OCI-LY7 (cell line): ENCODE measurements at regions of chr10 and their contacts with region 1.

Region 1: DNA sequence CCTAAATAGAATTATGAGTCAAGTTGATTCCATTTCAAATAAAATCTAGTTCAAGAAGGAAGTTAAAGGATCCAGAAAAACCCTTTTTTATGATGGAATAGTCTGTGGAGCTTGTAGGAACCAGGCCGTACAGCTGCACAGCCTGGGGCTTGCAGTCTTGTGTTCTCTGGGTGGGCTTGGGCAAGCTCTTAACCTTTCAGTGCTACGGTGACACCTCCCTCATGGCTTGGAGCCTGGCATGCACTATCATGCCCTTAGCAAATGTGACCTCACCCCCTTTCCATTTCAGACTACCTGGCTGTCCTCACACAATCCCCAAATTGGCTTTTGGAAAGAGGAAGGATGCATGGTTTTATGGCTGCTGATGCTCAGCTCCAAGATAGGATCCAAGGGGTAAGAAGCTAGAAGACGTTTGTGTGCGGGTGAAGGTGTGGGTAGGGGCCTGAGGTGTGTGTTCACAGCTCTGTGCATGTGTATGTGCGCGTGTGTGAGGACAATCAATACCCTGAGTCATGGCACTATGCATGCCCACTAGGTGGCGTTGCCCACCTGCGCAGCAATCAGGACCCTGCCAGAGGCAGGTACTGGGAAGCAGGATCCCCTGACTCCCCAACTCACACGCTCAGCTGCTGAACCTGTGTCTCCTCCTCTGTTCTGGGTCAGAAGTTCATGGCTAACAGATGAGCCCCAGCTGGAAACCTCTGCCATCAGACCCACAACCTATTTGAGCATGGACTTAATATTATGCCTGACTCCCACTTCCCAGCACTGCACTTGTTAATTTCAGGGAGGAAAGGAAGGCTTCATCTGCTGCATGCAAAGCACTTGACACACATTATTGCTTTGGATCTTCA is 113.4 kb downstream of the PTPN20 start:
- DNase-seq: peak; percentile 67
- H3K4me3 ChIP-seq: no peak overlapping the region
- H3K27ac ChIP-seq: no peak overlapping the region
- H3K4me1 ChIP-seq: no peaks in the 10 kb centered on the region
- CTCF ChIP-seq: peak; percentile 92

Region 2: GRCh38 chr10:47038851-47039561 is 14.4 kb after region 1 on chr10:
- CTCF ChIA-PET with region 1: no interaction called
- POLR2A ChIA-PET with region 1: no interaction called
- intact Hi-C with region 1: no loop called
- DNase-seq: no peak
- H3K4me3 ChIP-seq: no peak overlapping the region
- H3K27ac ChIP-seq: no peak overlapping the region
- H3K4me1 ChIP-seq: no peaks in the 10 kb centered on the region
- CTCF ChIP-seq: no peak

Region 3: DNA sequence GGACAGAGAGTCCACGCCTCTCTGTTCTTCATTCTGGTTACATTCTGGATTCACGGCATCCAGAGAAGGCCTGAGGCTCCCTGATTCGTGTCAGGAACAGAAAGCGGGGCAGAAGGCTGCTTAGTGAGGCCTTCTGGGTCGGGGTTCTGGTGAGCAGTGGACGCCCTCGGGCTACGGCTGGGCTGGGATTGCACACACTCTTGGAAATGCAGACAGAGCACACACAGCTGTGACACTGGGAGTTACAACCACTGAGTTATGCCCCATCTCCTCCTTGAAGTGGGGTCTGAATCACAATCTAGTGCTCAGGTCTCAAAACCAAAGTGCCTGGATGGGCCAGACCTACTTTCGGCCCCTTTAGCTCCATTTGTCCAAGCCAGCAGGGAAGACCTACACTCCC is 118.4 kb after region 1 on chr10:
- CTCF ChIA-PET with region 1: interaction called, 12 read pairs
- POLR2A ChIA-PET with region 1: no interaction called
- intact Hi-C with region 1: no loop called
- DNase-seq: no peak
- H3K4me3 ChIP-seq: no peak overlapping the region
- H3K27ac ChIP-seq: no peak overlapping the region
- H3K4me1 ChIP-seq: no peaks in the 10 kb centered on the region
- CTCF ChIP-seq: no peak

Region 4: GRCh38 chr10:47311932-47312662 is 287.5 kb after region 1 on chr10:
- CTCF ChIA-PET with region 1: interaction called, 10 read pairs
- POLR2A ChIA-PET with region 1: no interaction called
- intact Hi-C with region 1: loop called (anchors 1 kb)
- DNase-seq: peak; percentile 76
- H3K4me3 ChIP-seq: no peak overlapping the region
- H3K27ac ChIP-seq: no peak overlapping the region
- H3K4me1 ChIP-seq: no peaks in the 10 kb centered on the region
- CTCF ChIP-seq: peak; percentile 87

Region 5: DNA sequence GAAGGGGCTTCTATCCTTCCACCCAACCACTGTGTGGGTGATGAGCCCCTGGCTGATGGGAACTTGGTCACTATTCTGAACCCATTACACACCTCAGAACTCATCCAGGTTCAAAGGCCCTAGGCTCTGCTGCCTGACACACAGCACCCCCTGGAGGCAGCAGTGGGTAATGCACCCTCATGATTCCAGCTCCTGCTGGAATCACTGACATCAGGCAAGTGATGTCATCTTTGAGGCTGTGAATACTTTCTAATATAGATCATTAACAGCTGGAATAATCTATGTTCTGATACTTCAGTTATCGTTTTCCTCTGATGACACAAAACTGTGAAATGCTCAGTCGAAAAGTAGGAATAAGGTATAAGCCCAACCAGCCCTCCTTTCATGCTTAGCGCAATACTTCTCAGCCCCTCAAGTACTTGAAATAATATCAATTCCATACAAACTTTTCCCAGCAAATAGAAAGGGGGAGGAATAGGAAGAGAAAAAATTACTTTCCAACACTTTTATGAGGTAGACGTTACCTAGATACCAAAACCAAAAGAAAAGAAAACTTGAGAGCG is 316.1 kb after region 1 on chr10:
- CTCF ChIA-PET with region 1: no interaction called
- POLR2A ChIA-PET with region 1: no interaction called
- intact Hi-C with region 1: loop called (anchors 1 kb)
- DNase-seq: peak; percentile 45
- H3K4me3 ChIP-seq: no peak overlapping the region
- H3K27ac ChIP-seq: no peak overlapping the region
- H3K4me1 ChIP-seq: no peaks in the 10 kb centered on the region
- CTCF ChIP-seq: peak; percentile 98